B cell (primary cell): ENCODE measurements at regions of chr1 and their contacts with region 1.

Region 1: GRCh38 chr1:48793863-48794262 is 17.2 kb upstream of the BEND5 start:
- DNase-seq: peak; percentile 93
- ATAC-seq: peak; percentile 97
- H3K4me3 ChIP-seq: peak overlapping the region in 4 of 5 experiments; percentile 2 to 47 (median 20)
- H3K4me3 Mint-ChIP-seq: peak overlapping the region; percentile 77
- H3K27ac ChIP-seq: peak overlapping the region; percentile 87 to 96
- H3K27ac Mint-ChIP-seq: peak overlapping the region; percentile 92
- H3K4me1 ChIP-seq: peaks cover 83% of the 10 kb centered on the region in 2 donors
- H3K4me1 Mint-ChIP-seq: peaks cover 84% of the 10 kb centered on the region
- H3K27me3 ChIP-seq: no peaks in the 10 kb centered on the region
- H3K27me3 Mint-ChIP-seq: no peaks in the 10 kb centered on the region
- CTCF ChIP-seq: no peak

Region 2: GRCh38 chr1:48471691-48472576 is 321.9 kb before region 1 on chr1 and contains the start of gene SPATA6:
- CTCF ChIA-PET with region 1: no interaction called
- POLR2A ChIA-PET with region 1: no interaction called
- intact Hi-C with region 1: loop called (anchors 10 kb)
- DNase-seq: peak; percentile 94
- ATAC-seq: peak; percentile 93
- H3K4me3 ChIP-seq: peak within 1 kb of the TSS; percentile 58 to 82 (median 64)
- H3K4me3 Mint-ChIP-seq: peak within 1 kb of the TSS; percentile 83
- H3K27ac ChIP-seq: peak within 1 kb of the TSS; percentile 57 to 72
- H3K27ac Mint-ChIP-seq: peak within 1 kb of the TSS; percentile 57
- H3K4me1 ChIP-seq: peaks cover 24 to 26% of the 10 kb centered on the region in 2 donors
- H3K4me1 Mint-ChIP-seq: peaks cover 32% of the 10 kb centered on the region
- H3K27me3 ChIP-seq: no peaks in the 10 kb centered on the region
- H3K27me3 Mint-ChIP-seq: peaks cover 13% of the 10 kb centered on the region
- CTCF ChIP-seq: no peak
- total RNA-seq, gene SPATA6: 6.7 and 10.5 TPM in 2 replicates

Region 3: GRCh38 chr1:48619523-48619931 is 174.3 kb before region 1 on chr1:
- CTCF ChIA-PET with region 1: no interaction called
- POLR2A ChIA-PET with region 1: no interaction called
- intact Hi-C with region 1: no loop called
- DNase-seq: no peak
- ATAC-seq: no peak
- H3K4me3 ChIP-seq: no peak overlapping the region
- H3K4me3 Mint-ChIP-seq: no peak overlapping the region
- H3K27ac ChIP-seq: no peak overlapping the region
- H3K27ac Mint-ChIP-seq: no peak overlapping the region
- H3K4me1 ChIP-seq: no peaks in the 10 kb centered on the region
- H3K4me1 Mint-ChIP-seq: no peaks in the 10 kb centered on the region
- H3K27me3 ChIP-seq: no peaks in the 10 kb centered on the region
- H3K27me3 Mint-ChIP-seq: peaks cover 21% of the 10 kb centered on the region
- CTCF ChIP-seq: no peak

Region 4: GRCh38 chr1:48750109-48750508 is 43.8 kb before region 1 on chr1:
- CTCF ChIA-PET with region 1: interaction called, 3 read pairs
- POLR2A ChIA-PET with region 1: no interaction called
- intact Hi-C with region 1: loop called (anchors 1 kb)
- DNase-seq: peak; percentile 86
- ATAC-seq: peak; percentile 100
- H3K4me3 ChIP-seq: no peak overlapping the region
- H3K4me3 Mint-ChIP-seq: peak overlapping the region; percentile 7
- H3K27ac ChIP-seq: peak overlapping the region; percentile 36 to 74
- H3K27ac Mint-ChIP-seq: peak overlapping the region; percentile 83
- H3K4me1 ChIP-seq: peaks cover 38 to 41% of the 10 kb centered on the region in 2 donors
- H3K4me1 Mint-ChIP-seq: peaks cover 52% of the 10 kb centered on the region
- H3K27me3 ChIP-seq: no peaks in the 10 kb centered on the region
- H3K27me3 Mint-ChIP-seq: no peaks in the 10 kb centered on the region
- CTCF ChIP-seq: peak; percentile 83

Region 5: DNA sequence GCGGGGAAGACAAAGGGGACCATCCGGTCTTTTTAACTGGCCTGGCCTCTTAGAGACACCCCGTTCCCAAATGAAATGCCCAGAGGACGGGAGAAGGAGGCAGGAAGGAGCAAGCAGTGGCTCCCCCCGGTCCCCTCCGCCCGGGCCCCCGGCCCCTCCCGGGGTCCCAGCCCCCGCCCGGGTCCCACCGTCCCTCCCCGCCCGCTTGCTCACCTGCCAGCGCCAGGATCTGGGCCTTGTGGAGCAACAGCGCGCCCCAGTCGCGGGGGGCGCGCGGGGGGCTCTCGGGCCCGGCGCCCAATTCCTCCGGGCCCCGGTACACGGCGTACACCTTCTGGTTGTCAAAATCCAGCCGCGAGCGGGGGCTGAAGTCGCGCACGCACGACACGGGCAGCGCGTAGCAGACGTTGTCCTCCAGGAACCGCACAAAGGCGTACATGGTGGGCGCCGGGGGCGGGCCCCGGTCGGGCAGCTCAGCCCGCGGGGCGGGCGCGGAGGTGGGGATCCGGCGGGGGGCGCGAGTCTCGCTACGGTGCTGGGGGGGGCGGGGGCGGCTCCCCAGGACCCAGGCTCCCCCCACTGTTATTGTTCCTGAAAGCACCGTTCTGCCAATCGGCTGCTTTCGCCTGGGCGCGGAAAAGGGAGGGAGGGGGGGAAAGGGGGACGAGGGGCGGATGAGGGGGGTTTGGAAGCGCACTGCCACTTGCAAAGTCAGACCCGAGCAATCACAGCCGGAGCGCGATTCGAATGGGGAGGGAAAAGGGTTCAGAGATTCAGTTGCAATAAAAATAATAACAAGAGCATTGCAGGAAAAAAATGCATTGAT is 17.3 kb before region 1 on chr1 and contains the start of gene BEND5:
- CTCF ChIA-PET with region 1: interaction called, 9 read pairs
- POLR2A ChIA-PET with region 1: interaction called, 4 read pairs
- intact Hi-C with region 1: loop called (anchors 1 kb)
- DNase-seq: peak; percentile 82
- ATAC-seq: peak; percentile 80
- H3K4me3 ChIP-seq: peak within 1 kb of the TSS; percentile 59 to 85 (median 67)
- H3K4me3 Mint-ChIP-seq: peak within 1 kb of the TSS; percentile 97
- H3K27ac ChIP-seq: peak within 1 kb of the TSS; percentile 67 to 85
- H3K27ac Mint-ChIP-seq: peak within 1 kb of the TSS; percentile 95
- H3K4me1 ChIP-seq: peaks cover 59 to 63% of the 10 kb centered on the region in 2 donors
- H3K4me1 Mint-ChIP-seq: peaks cover 63% of the 10 kb centered on the region
- H3K27me3 ChIP-seq: no peaks in the 10 kb centered on the region
- H3K27me3 Mint-ChIP-seq: no peaks in the 10 kb centered on the region
- CTCF ChIP-seq: no peak
- total RNA-seq, gene BEND5: 15.5 and 19.5 TPM in 2 replicates